ENCODE measurements at regions of chr12 and their contacts with region 1.

Region 1: GRCh38 chr12:49842519-49843352 is at the start of gene BCDIN3D:
- DNase-seq: peak; percentile 65 to 96
- H3K4me3 ChIP-seq: peak within 1 kb of the TSS; percentile 77 to 79
- H3K27ac ChIP-seq: peak within 1 kb of the TSS; percentile 92 to 93
- H3K4me1 ChIP-seq: peaks cover 0 to 18% of the 10 kb centered on the region in 2 donors
- H3K27me3 ChIP-seq: no peaks in the 10 kb centered on the region
- CTCF ChIP-seq: no peak
- total RNA-seq, gene BCDIN3D: 2.6 TPM

Region 2: GRCh38 chr12:49644620-49644994 is 198.1 kb before region 1 on chr12:
- intact Hi-C with region 1: loop called (anchors 10 kb)
- DNase-seq: peak in 1 of 2 donors; percentile 88
- H3K4me3 ChIP-seq: no peak overlapping the region
- H3K27ac ChIP-seq: peak overlapping the region; percentile 21 to 23
- H3K4me1 ChIP-seq: peaks cover 0 to 19% of the 10 kb centered on the region in 2 donors
- H3K27me3 ChIP-seq: no peaks in the 10 kb centered on the region
- CTCF ChIP-seq: peak; percentile 93 to 98 (median 93)

Region 3: DNA sequence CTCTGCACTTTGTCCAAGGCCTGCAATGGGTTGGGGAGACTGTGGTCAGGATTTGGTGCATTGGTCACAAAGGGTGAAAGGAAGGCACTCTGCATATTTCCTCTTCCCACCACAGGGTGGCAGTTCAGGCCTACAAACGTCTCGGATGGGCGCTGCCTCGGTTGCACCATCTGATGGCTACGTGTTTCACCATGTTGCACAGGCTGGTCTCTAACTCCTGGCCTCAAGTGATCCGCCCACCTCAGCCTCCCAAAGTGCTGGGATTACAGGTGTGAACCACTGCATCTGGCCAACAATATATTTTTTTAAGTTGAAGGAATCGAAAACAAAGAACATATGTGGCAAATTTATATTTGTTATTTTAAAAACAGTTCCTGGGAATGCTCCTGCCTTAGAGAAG is 66.3 kb before region 1 on chr12:
- intact Hi-C with region 1: loop called (anchors 2 kb)
- DNase-seq: peak in 1 of 2 donors; percentile 78
- H3K4me3 ChIP-seq: no peak overlapping the region
- H3K27ac ChIP-seq: no peak overlapping the region
- H3K4me1 ChIP-seq: no peaks in the 10 kb centered on the region
- H3K27me3 ChIP-seq: no peaks in the 10 kb centered on the region
- CTCF ChIP-seq: peak; percentile 70 to 83 (median 80)

Region 4: GRCh38 chr12:49828133-49829091 is 14.3 kb before region 1 on chr12 and contains the start of gene NCKAP5L:
- intact Hi-C with region 1: loop called (anchors 1 kb)
- DNase-seq: peak; percentile 88 to 99
- H3K4me3 ChIP-seq: peak within 1 kb of the TSS; percentile 99
- H3K27ac ChIP-seq: peak within 1 kb of the TSS; percentile 91 to 92
- H3K4me1 ChIP-seq: peaks cover 5 to 28% of the 10 kb centered on the region in 2 donors
- H3K27me3 ChIP-seq: no peaks in the 10 kb centered on the region
- CTCF ChIP-seq: no peak
- total RNA-seq, gene NCKAP5L: 33.4 TPM